PC-3 (cell line): ENCODE measurements at regions of chr1 and their contacts with region 1.

Region 1: GRCh38 chr1:40178200-40178599 is 17.0 kb downstream of the RLF start:
- DNase-seq: no peak
- ATAC-seq: no peak
- H3K4me3 ChIP-seq: no peak overlapping the region
- H3K27ac ChIP-seq: no peak overlapping the region
- H3K4me1 ChIP-seq: no peaks in the 10 kb centered on the region
- H3K27me3 ChIP-seq: no peaks in the 10 kb centered on the region
- CTCF ChIP-seq: no peak

Region 2: DNA sequence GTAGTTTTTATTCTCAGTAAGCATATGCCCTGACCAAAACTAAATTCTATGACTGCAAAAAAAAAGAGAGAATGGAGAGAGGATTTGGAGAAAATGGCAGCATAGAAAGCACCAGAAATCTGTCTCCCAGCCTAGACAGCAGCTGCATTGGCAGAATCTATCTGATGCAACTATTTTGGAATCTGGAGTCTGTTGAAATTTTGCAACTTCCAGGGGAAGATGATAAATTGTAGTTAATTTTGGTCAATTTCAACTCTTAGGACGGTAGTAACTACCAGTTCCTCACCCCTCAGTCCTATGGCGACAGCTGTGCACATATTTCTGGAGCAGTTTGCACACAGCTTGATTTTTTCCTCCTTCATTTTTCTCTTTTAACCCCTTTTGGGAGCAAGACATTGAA is 341.3 kb after region 1 on chr1:
- CTCF ChIA-PET with region 1: no interaction called
- POLR2A ChIA-PET with region 1: interaction called, 31 read pairs
- intact Hi-C with region 1: no loop called
- DNase-seq: no peak
- ATAC-seq: no peak
- H3K4me3 ChIP-seq: no peak overlapping the region
- H3K27ac ChIP-seq: no peak overlapping the region
- H3K4me1 ChIP-seq: no peaks in the 10 kb centered on the region
- H3K27me3 ChIP-seq: no peaks in the 10 kb centered on the region
- CTCF ChIP-seq: no peak

Region 3: GRCh38 chr1:40583980-40584379 is 405.8 kb after region 1 on chr1:
- CTCF ChIA-PET with region 1: no interaction called
- POLR2A ChIA-PET with region 1: no interaction called
- intact Hi-C with region 1: no loop called
- DNase-seq: no peak
- ATAC-seq: no peak
- H3K4me3 ChIP-seq: no peak overlapping the region
- H3K27ac ChIP-seq: no peak overlapping the region
- H3K4me1 ChIP-seq: peaks cover 4% of the 10 kb centered on the region
- H3K27me3 ChIP-seq: peaks cover 12% of the 10 kb centered on the region
- CTCF ChIP-seq: no peak